ENCODE measurements at regions of chr3 and their contacts with region 1.

Region 1: GRCh38 chr3:36786921-36787890 is 22.9 kb upstream of the DCLK3 start:
- DNase-seq: no peak
- H3K4me3 ChIP-seq: no peak overlapping the region
- H3K27ac ChIP-seq: no peak overlapping the region
- H3K4me1 ChIP-seq: no peaks in the 10 kb centered on the region
- H3K27me3 ChIP-seq: no peaks in the 10 kb centered on the region
- CTCF ChIP-seq: no peak

Region 2: DNA sequence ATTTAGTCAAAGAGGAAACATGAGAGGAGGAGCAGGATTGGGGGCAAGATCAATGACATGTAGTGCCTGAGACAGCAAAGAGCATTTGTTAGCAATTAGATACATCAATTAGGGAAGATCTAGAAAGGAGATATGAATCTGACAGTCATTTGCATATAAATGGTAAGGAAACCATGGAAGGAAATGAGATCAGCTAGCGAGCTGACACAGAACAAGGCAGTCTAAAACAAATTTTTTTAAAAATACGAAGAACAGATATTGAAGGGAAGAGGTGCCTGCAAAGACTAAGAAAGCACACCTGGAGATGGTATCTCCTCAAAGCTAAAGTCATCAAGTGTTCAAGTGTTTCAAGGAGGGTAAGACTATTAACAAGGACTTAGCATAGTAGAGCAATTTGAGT is 201.2 kb after region 1 on chr3:
- CTCF ChIA-PET with region 1: no interaction called
- POLR2A ChIA-PET with region 1: interaction called, 14 read pairs
- intact Hi-C with region 1: no loop called
- DNase-seq: no peak
- H3K4me3 ChIP-seq: no peak overlapping the region
- H3K27ac ChIP-seq: no peak overlapping the region
- H3K4me1 ChIP-seq: peaks cover 21% of the 10 kb centered on the region
- H3K27me3 ChIP-seq: no peaks in the 10 kb centered on the region
- CTCF ChIP-seq: no peak

Region 3: GRCh38 chr3:37729119-37729518 is 941.9 kb after region 1 on chr3:
- CTCF ChIA-PET with region 1: no interaction called
- POLR2A ChIA-PET with region 1: no interaction called
- intact Hi-C with region 1: no loop called
- DNase-seq: no peak
- H3K4me3 ChIP-seq: no peak overlapping the region
- H3K27ac ChIP-seq: no peak overlapping the region
- H3K4me1 ChIP-seq: no peaks in the 10 kb centered on the region
- H3K27me3 ChIP-seq: peaks cover 88% of the 10 kb centered on the region
- CTCF ChIP-seq: no peak